ENCODE measurements at regions of chr16 and their contacts with region 1.

Region 1: DNA sequence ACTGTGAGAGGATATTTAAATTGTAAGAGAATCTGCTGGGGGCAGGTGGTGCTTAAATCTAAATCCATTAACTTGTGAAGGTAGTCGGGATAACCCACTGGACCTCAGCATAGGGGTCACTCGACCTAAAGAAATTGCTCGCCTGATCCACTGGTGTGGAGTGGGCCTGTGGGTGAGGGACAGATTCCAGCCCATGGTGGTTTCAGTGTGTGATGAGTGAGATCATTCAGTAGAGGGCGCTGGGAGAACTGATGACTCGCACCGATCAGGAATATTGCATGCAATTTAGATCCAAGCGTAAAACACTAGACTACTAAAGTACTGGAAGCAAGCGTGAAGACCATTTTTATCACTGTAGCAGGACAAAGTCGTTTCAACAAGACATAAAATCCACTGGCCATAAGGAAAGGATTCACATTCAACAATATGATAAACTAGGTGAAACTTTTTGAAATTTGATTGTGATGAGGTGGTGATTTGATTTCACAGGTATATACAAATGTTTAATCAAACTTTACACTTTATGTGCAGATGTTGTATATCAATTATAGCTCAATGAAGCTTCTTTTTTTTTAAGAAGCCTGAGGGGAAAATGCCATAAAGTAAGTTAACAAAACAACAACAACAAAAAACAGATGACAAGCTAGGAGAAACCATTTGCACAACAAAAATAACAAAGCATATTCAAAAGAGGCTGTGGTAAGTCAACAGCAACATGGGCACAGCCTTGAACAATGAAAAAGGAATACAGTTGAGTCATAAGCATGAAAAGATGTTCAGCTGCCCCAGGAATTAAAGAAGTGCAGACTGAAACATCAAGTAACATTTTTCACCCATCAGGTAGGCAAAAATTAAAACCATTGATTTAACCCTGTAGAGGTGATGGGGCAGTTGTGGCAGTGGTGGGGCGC is 7.5 kb upstream of the TMEM170A start:
- DNase-seq: peak; percentile 62 to 88
- ATAC-seq: peak; percentile 97 to 98
- H3K4me3 ChIP-seq: no peak overlapping the region
- H3K27ac ChIP-seq: no peak overlapping the region
- H3K4me1 ChIP-seq: no peaks in the 10 kb centered on the region
- CTCF ChIP-seq: peak; percentile 82
- EP300 ChIP-seq: no peak
- POLR2A ChIP-seq: no peak
- RAD21 ChIP-seq: peak; percentile 80 to 86

Region 2: DNA sequence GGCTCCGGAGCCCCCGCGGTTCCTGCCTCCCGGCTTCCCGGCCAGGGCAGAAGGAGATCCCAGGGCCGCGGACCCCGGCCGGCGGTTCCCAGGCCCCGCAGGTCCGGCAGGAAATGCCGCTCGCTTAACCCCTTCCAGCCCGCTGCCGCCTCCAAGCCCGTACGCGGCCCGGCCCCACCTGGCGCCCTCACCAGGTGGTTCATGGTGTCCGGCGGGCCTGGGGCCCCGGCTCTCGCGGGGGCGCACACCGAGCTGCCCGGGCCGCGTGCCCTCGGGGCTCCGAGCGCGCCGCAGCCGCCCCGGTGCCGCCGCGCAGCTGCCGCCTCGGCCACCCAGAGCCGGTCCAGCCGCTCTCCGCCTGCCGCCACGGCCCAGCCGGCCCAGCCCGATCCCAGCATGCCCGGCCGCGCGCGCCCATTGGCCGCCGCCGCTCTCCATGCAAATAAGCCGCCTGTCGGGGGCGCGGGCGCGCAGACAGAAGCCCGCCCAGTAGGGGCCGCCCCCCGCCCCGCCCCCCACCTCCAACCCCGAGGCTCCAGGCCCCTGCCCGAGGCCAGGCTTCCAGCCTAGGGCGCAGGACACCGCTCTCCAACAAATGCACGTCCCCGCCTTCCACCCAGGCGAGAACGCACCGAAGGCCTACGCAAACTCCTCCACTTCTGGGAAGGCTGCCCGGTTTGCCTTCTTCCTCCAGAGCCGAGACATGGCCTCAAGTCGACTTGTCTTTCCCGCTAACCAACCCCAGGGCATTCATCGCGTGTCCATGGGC is 220.5 kb before region 1 on chr16 and contains the start of gene BCAR1:
- CTCF ChIA-PET with region 1: no interaction called
- POLR2A ChIA-PET with region 1: no interaction called
- DNase-seq: peak; percentile 85 to 87
- ATAC-seq: peak; percentile 69 to 77
- H3K4me3 ChIP-seq: peak within 1 kb of the TSS; percentile 74
- H3K27ac ChIP-seq: peak within 1 kb of the TSS; percentile 89 to 99
- H3K4me1 ChIP-seq: peaks cover 83% of the 10 kb centered on the region
- CTCF ChIP-seq: no peak; the same call in 2 of the 3 replicates
- EP300 ChIP-seq: no peak
- POLR2A ChIP-seq: peak; percentile 65
- RAD21 ChIP-seq: no peak
- polyA plus RNA-seq, gene BCAR1: 8.3 and 10.2 TPM in 2 replicates

Region 3: DNA sequence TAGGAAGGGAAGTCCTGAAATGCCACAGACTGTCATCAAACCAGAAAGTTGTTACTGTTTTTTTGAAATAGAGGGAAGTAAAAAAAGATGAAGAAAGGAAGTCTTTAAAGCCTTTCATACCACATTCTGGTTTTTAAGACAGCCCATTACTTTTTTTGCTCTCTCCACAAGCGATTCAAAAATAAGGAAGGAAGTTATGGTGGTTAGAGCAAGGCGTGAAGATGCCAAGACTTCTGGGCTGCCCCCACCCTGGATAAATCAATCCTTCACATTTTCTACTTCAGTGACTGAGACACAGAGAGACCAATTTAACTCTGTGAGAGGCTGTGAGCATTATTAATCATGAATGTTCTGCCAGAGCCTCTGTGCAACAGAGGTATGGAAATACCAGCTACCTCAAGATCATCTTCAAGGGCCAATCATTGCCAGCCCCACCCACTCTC is 138.2 kb before region 1 on chr16:
- CTCF ChIA-PET with region 1: no interaction called
- POLR2A ChIA-PET with region 1: no interaction called
- DNase-seq: no peak
- ATAC-seq: no peak
- H3K4me3 ChIP-seq: no peak overlapping the region
- H3K27ac ChIP-seq: no peak overlapping the region
- H3K4me1 ChIP-seq: no peaks in the 10 kb centered on the region
- CTCF ChIP-seq: no peak
- EP300 ChIP-seq: no peak
- POLR2A ChIP-seq: no peak
- RAD21 ChIP-seq: no peak

Region 4: DNA sequence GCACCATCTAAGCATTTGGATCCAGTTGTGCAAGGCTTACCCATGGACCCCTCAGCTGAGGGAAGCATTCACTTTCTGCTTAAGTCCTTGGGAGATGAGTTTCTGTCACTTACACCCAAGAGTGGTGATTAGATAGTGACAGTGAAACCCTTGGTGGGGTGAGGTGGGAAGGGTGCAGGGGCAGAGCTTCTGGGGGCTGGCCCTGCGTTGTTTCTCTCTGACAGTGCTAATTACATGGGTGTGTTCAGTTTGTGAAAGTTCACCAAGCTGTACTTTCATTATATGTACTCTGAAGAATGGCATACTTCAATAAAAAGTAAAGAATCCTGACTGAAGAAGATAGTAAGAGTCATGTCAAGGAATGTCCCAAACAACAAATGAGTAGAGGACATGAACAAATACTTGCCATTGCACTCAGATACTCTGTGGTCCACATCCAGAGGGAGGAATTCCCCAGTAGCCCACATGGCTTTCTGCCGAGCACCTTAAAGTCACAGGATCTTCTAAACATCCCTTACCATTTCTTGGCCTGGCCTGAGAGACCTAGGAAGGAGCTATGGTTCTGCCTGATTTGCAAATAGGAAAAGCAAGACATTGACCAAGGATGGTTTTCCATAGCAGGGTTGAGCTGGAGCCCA is 14.8 kb after region 1 on chr16:
- CTCF ChIA-PET with region 1: interaction called, 15 read pairs
- POLR2A ChIA-PET with region 1: no interaction called
- DNase-seq: no peak
- ATAC-seq: no peak
- H3K4me3 ChIP-seq: no peak overlapping the region
- H3K27ac ChIP-seq: no peak overlapping the region
- H3K4me1 ChIP-seq: peaks cover 8% of the 10 kb centered on the region; the same call in 1 of the 3 replicates
- CTCF ChIP-seq: no peak
- EP300 ChIP-seq: no peak
- POLR2A ChIP-seq: no peak
- RAD21 ChIP-seq: no peak

Region 5: GRCh38 chr16:75495076-75495674 is 23.2 kb after region 1 on chr16 and contains the start of gene CHST6:
- CTCF ChIA-PET with region 1: interaction called, 23 read pairs
- POLR2A ChIA-PET with region 1: no interaction called
- DNase-seq: peak in 1 of 2 experiments; percentile 17
- ATAC-seq: peak; percentile 47 to 82; a peak in 4 of 6 replicates
- H3K4me3 ChIP-seq: peak within 1 kb of the TSS; percentile 44
- H3K27ac ChIP-seq: peak within 1 kb of the TSS; percentile 60 to 83; a peak in 5 of 6 replicates
- H3K4me1 ChIP-seq: 0 out of 3 replicates have a peak, but pooled peaks cover 3% of the 10 kb centered on the region
- CTCF ChIP-seq: no peak
- EP300 ChIP-seq: no peak
- POLR2A ChIP-seq: no peak; the same call in 1 of the 2 replicates
- RAD21 ChIP-seq: no peak
- polyA plus RNA-seq, gene CHST6: 0.37 and 0.57 TPM in 2 replicates

Region 6: DNA sequence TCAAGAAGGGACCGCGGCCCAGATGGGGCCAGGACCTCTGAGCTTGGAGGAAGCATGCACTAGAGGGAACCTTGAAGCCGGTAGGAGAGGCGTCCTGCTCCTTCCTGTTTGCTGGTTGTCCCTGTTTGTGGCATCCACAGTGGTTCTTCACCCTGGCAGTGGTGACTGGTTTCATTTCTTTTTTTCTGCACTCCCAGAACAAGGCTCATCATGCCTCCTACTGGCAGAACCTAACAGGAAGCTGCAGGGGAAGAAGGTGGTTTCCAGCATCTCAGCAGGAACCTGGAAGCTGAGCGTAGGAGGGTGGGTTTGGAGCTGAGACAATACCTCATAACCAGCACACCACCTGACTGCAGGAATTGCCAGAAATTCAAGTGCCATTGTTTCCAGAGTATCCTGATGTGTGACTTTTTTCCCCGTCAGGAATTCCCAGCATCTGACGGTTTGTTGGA is 78.3 kb after region 1 on chr16:
- CTCF ChIA-PET with region 1: interaction called, 22 read pairs
- POLR2A ChIA-PET with region 1: no interaction called
- DNase-seq: peak; percentile 49 to 61
- ATAC-seq: peak; percentile 55 to 56; a peak in 4 of 6 replicates
- H3K4me3 ChIP-seq: no peak overlapping the region
- H3K27ac ChIP-seq: no peak overlapping the region
- H3K4me1 ChIP-seq: peaks cover 6% of the 10 kb centered on the region; the same call in 2 of the 3 replicates
- CTCF ChIP-seq: no peak; the same call in 1 of the 3 replicates
- EP300 ChIP-seq: no peak
- POLR2A ChIP-seq: no peak
- RAD21 ChIP-seq: peak in 1 of 2 experiments; percentile 65; a peak in 2 of 5 replicates

Region 7: DNA sequence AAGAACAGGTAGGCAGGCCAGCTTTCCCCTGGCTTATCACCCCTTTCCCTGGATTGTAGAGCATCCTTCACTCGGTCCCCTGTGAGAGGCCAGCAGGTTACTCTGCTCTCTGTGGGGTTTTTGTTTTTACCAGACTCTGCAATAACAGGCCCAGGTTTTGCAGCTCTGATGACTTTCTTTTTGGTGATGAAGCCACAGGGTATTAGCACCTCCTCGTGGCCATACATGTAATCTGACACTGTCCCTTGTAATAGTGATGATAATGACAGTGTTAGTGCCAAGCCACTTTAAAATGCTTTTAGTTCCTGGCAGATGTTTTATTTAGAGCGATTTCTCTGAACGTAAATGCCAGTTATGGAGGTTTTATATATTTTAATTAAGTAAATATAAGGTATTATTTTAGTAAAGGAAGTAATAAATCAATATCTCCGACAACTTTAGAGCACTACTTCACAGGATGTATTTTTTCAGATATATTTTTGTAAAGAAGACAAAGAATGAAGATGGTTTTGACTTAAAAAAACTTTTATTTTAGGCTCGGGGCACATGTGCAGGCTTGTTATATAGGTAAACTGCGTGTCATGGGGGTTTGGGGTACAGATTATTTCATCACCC is 292.3 kb after region 1 on chr16:
- CTCF ChIA-PET with region 1: interaction called, 17 read pairs
- POLR2A ChIA-PET with region 1: no interaction called
- DNase-seq: peak; percentile 58 to 72
- ATAC-seq: peak; percentile 90 to 96
- H3K4me3 ChIP-seq: no peak overlapping the region
- H3K27ac ChIP-seq: no peak overlapping the region
- H3K4me1 ChIP-seq: no peaks in the 10 kb centered on the region
- CTCF ChIP-seq: peak; percentile 84
- EP300 ChIP-seq: no peak
- POLR2A ChIP-seq: no peak
- RAD21 ChIP-seq: peak; percentile 86 to 90

Measured in A549 (cell line).